ENCODE measurements at regions of chr17 and their contacts with region 1.

Region 1: DNA sequence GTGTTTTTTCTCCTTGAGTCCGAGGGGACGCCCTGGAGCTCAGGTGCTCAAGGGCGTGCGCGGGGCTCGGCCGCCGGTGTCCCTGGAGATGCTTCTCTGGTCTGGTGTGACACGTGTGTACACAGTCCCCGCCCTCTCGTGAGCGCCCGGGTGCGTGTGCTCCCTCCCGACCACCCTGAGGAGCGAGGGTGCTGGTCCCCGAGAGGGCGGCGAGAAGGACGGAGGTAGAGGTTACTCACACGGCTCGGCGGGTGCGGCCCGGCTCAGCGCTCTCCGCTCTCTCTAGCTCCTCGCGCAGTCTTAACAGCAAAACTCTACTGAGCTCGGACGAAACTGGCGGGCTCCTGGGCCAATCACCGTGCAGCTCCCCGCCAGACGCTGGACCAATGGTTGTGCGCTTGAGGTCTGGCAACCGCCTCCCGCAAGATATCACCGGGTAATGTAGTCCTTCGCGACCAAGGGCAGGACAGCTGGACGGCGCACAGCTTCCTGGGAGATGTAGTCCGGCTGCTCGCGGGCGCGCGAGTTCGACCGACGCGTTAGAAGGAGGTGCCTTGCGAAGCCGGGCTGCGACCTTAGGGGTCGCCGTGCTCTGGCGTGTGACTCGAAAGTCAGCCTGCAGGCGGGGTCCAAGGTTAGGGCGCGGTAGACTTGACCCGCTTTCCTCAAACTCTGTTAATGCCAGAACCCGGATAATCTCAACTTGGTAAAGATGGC is at the start of gene SLC25A19:
- DNase-seq: peak; percentile 99
- ATAC-seq: peak; percentile 97
- H3K4me3 ChIP-seq: peak within 1 kb of the TSS; percentile 74 to 94 (median 87)
- H3K27ac ChIP-seq: peak within 1 kb of the TSS; percentile 75
- H3K4me1 ChIP-seq: peaks cover 57% of the 10 kb centered on the region
- H3K27me3 ChIP-seq: no peaks in the 10 kb centered on the region
- CTCF ChIP-seq: peak; percentile 93
- EP300 ChIP-seq: no peak
- POLR2A ChIP-seq: peak; percentile 94 to 99
- RAD21 ChIP-seq: peak; percentile 77
- total RNA-seq, gene SLC25A19: 41.4 and 42.2 TPM in 2 replicates

Region 2: GRCh38 chr17:75271233-75271954 is 17.9 kb before region 1 on chr17:
- CTCF ChIA-PET with region 1: interaction called, 3 read pairs
- POLR2A ChIA-PET with region 1: interaction called, 73 read pairs
- in situ Hi-C with region 1: no loop called
- intact Hi-C with region 1: loop called (anchors 1 kb)
- DNase-seq: peak; percentile 58
- ATAC-seq: peak; percentile 36
- H3K4me3 ChIP-seq: peak overlapping the region; percentile 91 to 98 (median 94)
- H3K27ac ChIP-seq: peak overlapping the region; percentile 77
- H3K4me1 ChIP-seq: peaks cover 43% of the 10 kb centered on the region
- H3K27me3 ChIP-seq: no peaks in the 10 kb centered on the region
- CTCF ChIP-seq: peak; percentile 70
- EP300 ChIP-seq: no peak
- POLR2A ChIP-seq: peak in 1 of 2 experiments; percentile 71; a peak in 2 of 4 replicates
- RAD21 ChIP-seq: peak; percentile 87

Region 3: GRCh38 chr17:75277664-75278071 is 11.6 kb before region 1 on chr17:
- CTCF ChIA-PET with region 1: no interaction called
- POLR2A ChIA-PET with region 1: interaction called, 73 read pairs
- in situ Hi-C with region 1: no loop called
- intact Hi-C with region 1: no loop called
- DNase-seq: no peak
- ATAC-seq: no peak
- H3K4me3 ChIP-seq: no peak overlapping the region
- H3K27ac ChIP-seq: no peak overlapping the region
- H3K4me1 ChIP-seq: peaks cover 3% of the 10 kb centered on the region
- H3K27me3 ChIP-seq: no peaks in the 10 kb centered on the region
- CTCF ChIP-seq: no peak
- EP300 ChIP-seq: no peak
- POLR2A ChIP-seq: no peak
- RAD21 ChIP-seq: no peak

Measured in HepG2 (cell line).